ENCODE measurements at regions of chr4 and their contacts with region 1.

Region 1: DNA sequence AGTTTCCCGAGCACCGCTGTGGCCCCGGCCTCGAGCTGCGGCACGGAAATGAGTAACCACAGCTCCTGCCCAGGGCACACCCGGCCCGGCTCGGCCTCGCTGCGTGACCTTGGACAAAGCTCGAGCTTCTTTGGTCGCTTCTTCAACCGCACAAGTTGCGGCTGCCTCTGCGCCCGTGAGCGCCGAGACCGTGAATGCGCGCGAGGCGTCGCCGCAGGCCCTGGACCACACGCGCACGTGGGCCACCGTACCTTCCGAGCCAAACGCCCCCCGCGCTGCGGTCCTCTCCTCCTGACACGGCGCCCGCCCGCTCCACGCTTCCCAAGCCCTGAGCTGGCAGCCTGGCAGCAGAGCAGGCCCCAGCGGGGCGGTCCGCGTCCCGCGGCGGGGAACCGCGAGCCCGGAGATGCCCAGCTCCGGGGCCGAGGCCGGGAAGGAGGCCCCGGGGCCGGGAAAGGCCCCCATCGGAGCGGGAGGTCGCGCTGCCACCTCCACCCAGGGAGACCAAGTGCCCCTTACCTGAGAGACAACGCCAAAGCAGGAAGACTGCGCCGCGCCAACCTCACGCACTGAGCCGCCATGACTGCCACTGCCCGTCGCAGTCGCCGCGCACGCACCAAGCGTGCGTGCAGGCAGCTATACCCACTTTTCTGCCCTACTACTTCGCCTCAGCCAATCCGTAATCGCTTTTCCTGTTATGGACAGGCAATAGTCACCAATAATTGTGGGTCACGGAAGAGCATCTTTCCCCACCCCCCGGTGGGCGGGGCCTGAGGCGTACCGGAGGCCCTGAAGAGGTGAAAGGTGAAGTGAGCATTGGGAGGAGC is at the start of gene GRPEL1:
- DNase-seq: peak; percentile 99
- H3K4me3 ChIP-seq: peak within 1 kb of the TSS; percentile 98
- H3K27ac ChIP-seq: peak within 1 kb of the TSS; percentile 85
- H3K4me1 ChIP-seq: peaks cover 6% of the 10 kb centered on the region
- H3K27me3 ChIP-seq: no peaks in the 10 kb centered on the region
- CTCF ChIP-seq: no peak
- total RNA-seq, gene GRPEL1: 70.1 and 78.2 TPM in 2 replicates

Region 2: DNA sequence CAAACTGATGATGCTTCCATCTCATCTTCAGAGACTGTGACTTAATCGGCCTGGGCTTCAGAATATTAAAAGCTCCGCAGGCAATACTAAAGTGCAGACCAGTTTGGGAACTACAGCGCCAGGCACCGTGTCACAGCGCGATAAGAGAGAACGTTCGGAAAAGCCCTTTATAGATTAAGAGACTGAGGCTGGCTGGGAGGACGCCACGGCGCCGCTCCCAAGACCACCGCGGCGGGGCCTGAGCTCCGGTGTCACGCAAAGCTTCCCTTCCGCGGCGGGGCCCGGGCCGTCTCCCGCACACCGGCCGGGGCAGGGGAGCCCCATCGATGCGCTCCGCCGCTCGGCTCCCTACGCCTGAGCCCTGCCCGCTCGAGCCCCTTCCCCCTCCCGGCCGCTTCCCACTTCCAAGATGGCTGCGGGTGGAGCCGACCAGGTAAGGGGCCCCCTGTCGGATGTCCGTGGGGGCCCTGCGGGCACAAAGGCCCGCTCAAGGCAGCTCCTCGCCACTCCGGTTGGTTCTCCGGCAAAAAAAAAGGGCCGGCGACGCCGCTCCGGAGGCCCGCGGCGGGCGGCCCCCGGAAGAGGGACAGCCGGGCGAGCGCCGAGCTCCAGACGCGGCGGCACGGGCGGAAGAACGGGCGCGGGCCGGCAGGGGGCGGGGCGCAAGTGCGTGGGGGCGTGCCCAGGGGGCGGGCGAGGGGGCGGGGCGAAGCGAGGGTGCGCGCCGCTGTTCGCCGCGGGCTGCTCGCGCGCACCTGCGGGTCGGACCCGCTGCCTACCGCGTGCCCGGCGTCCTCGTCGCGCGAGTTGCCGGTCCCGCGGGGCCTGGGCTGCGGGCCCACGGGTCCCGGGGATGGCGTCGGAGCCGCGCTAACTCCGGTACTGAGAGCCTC is 158.3 kb before region 1 on chr4 and contains the start of gene TBC1D14:
- CTCF ChIA-PET with region 1: no interaction called
- POLR2A ChIA-PET with region 1: no interaction called
- intact Hi-C with region 1: loop called (anchors 10 kb)
- DNase-seq: peak; percentile 92
- H3K4me3 ChIP-seq: peak within 1 kb of the TSS; percentile 89
- H3K27ac ChIP-seq: peak within 1 kb of the TSS; percentile 99
- H3K4me1 ChIP-seq: peaks cover 9% of the 10 kb centered on the region
- H3K27me3 ChIP-seq: no peaks in the 10 kb centered on the region
- CTCF ChIP-seq: no peak
- total RNA-seq, gene TBC1D14: 44.3 and 46.0 TPM in 2 replicates

Region 3: GRCh38 chr4:6974138-6974848 is 93.4 kb before region 1 on chr4:
- CTCF ChIA-PET with region 1: interaction called, 4 read pairs
- POLR2A ChIA-PET with region 1: no interaction called
- intact Hi-C with region 1: loop called (anchors 5 kb)
- DNase-seq: peak; percentile 85
- H3K4me3 ChIP-seq: no peak overlapping the region
- H3K27ac ChIP-seq: no peak overlapping the region
- H3K4me1 ChIP-seq: no peaks in the 10 kb centered on the region
- H3K27me3 ChIP-seq: no peaks in the 10 kb centered on the region
- CTCF ChIP-seq: peak; percentile 89

Region 4: DNA sequence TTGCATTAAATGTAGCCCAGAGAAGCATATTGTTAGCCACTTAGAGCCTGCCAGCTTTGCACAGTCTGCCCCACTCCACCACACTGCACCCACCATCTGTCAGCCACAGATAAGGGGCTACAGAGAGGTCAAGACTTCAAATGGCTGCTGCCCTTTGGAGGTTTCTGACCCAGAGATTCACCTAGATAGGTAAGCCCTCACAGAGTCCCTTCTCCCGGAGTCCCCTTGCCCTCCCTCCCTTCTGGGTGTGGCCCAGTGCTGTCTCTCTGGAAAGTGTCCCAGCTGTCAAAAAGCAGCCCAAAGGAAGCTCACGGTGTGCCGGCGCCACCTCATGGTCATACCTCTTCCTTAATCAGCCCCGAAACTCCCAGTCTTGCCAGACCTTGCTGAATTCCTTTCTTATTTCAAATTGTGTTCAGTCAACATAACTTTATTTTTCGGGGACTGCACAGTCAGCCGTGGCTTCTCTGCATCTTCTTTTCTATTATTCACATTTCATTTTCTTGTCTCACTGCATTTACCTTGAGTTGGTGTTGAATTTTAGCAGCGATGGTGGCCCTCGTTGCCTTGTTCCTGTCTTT is 14.3 kb after region 1 on chr4:
- CTCF ChIA-PET with region 1: interaction called, 12 read pairs
- POLR2A ChIA-PET with region 1: no interaction called
- intact Hi-C with region 1: no loop called
- DNase-seq: peak; percentile 72
- H3K4me3 ChIP-seq: no peak overlapping the region
- H3K27ac ChIP-seq: no peak overlapping the region
- H3K4me1 ChIP-seq: no peaks in the 10 kb centered on the region
- H3K27me3 ChIP-seq: no peaks in the 10 kb centered on the region
- CTCF ChIP-seq: peak; percentile 66